CD4-positive, alpha-beta T cell (primary cell): ENCODE measurements at regions of chr19 and their contacts with region 1.

Region 1: DNA sequence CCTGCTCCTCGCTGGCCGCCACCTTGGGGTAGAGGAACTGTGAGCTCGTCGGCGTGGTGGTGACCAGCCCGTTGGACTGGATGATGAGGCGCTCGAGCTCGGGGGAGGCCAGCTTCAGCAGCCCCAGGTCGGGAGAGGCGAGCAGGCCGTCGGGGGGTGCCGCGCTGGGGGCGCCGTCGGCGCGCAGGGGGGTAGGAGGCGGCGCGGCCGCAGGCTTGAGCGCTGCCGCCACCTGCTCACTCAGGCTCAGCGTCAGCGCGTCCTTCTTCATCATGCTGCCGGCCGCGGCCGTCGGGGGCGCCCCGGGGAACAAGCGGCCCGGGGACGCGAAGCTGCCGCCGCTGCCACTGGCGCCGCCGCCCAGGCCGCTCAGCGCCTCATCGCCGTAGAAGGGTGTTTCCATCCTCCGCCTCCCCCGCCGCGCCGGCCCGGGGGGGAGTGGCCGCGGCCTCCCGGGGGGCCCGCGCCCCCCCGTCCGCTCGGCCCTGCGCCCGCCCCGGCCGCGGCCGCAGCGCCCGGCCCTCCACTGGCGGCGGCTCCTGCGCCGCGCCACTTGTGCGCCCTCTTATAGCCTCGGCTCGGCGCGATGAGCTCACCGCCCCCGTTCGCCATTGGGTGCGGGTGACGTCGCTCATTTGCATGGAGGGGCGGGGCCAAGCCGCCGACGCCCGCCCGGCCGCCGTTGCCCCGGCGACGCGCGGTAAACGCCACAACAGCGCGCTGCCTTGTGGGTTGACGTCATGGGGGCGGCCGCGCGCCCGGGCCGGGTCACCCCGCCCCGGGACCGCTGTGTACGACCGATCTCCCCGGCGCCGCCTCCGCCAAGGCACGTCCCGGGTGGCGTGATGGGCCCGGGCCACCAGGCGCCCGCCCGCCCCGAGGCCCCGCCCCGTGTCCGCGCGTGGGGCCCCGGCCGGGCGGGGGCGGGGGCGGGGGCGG is at the start of gene JUND:
- DNase-seq: peak; percentile 92 to 100 (median 97)
- ATAC-seq: peak; percentile 63
- H3K4me3 ChIP-seq: peak within 1 kb of the TSS; percentile 99
- H3K4me3 Mint-ChIP-seq: peak within 1 kb of the TSS; percentile 99
- H3K27ac ChIP-seq: peak within 1 kb of the TSS; percentile 99
- H3K27ac Mint-ChIP-seq: peak within 1 kb of the TSS; percentile 100
- H3K4me1 ChIP-seq: peaks cover 65% of the 10 kb centered on the region
- H3K4me1 Mint-ChIP-seq: peaks cover 58% of the 10 kb centered on the region
- H3K27me3 ChIP-seq: no peaks in the 10 kb centered on the region
- H3K27me3 Mint-ChIP-seq: peaks cover 9% of the 10 kb centered on the region
- CTCF ChIP-seq: no peak
- total RNA-seq, gene JUND: 1,827 to 1,976 TPM

Region 2: DNA sequence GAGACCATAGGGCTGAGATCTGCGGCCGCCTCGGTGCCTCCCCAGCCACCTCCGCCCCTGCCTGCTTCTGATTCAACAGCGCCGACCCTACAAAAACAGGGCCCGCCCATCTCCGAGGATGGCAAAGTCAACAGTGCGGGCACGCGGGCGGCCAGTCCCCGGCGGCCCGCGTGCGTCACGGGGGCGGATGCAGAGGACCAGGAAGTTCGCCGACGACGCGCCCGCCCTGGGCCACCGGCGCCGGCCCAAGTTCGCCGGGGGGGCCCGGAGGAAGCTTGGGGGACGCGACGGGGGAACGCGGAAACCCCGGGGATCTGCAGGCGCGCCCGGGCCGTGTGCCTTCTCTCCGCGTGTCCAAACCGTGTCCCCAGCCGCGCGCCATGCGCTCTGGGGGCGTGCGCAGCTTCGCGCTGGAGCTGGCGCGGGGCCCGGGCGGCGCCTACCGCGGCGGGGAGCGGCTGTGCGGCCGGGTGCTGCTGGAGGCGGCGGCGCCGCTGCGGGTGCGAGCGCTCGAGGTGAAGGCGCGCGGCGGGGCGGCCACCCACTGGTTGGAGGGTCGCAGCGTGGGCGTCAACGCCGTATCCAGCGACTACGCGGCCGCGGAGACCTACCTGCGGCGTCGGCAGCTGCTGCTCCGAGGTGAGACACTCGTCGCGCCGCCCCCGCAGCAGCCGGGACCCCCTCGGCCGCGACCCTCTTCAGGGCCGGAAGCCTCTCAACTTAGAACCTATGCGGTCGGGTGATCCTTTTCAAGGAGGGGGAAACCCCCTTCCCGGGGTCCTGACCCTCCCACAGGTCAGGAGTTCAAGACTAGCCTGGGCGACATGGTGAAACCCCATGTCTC is 280.2 kb before region 1 on chr19:
- CTCF ChIA-PET with region 1: no interaction called
- POLR2A ChIA-PET with region 1: interaction called, 10 read pairs
- intact Hi-C with region 1: no loop called
- DNase-seq: peak; percentile 80 to 99 (median 94)
- ATAC-seq: peak; percentile 80
- H3K4me3 ChIP-seq: peak overlapping the region; percentile 92
- H3K4me3 Mint-ChIP-seq: peak overlapping the region; percentile 93
- H3K27ac ChIP-seq: peak overlapping the region; percentile 91 to 95
- H3K27ac Mint-ChIP-seq: peak overlapping the region; percentile 98
- H3K4me1 ChIP-seq: peaks cover 49% of the 10 kb centered on the region
- H3K4me1 Mint-ChIP-seq: peaks cover 28% of the 10 kb centered on the region
- H3K27me3 ChIP-seq: no peaks in the 10 kb centered on the region
- H3K27me3 Mint-ChIP-seq: peaks cover 4% of the 10 kb centered on the region
- CTCF ChIP-seq: no peak

Region 3: GRCh38 chr19:18117692-18118378 is 163.5 kb before region 1 on chr19:
- CTCF ChIA-PET with region 1: interaction called, 3 read pairs
- POLR2A ChIA-PET with region 1: interaction called, 20 read pairs
- intact Hi-C with region 1: no loop called
- DNase-seq: peak; percentile 88 to 99 (median 96)
- ATAC-seq: peak; percentile 72
- H3K4me3 ChIP-seq: peak overlapping the region; percentile 86
- H3K4me3 Mint-ChIP-seq: peak overlapping the region; percentile 90
- H3K27ac ChIP-seq: peak overlapping the region; percentile 77 to 80
- H3K27ac Mint-ChIP-seq: peak overlapping the region; percentile 97
- H3K4me1 ChIP-seq: peaks cover 58% of the 10 kb centered on the region
- H3K4me1 Mint-ChIP-seq: peaks cover 37% of the 10 kb centered on the region
- H3K27me3 ChIP-seq: no peaks in the 10 kb centered on the region
- H3K27me3 Mint-ChIP-seq: no peaks in the 10 kb centered on the region
- CTCF ChIP-seq: no peak

Region 4: DNA sequence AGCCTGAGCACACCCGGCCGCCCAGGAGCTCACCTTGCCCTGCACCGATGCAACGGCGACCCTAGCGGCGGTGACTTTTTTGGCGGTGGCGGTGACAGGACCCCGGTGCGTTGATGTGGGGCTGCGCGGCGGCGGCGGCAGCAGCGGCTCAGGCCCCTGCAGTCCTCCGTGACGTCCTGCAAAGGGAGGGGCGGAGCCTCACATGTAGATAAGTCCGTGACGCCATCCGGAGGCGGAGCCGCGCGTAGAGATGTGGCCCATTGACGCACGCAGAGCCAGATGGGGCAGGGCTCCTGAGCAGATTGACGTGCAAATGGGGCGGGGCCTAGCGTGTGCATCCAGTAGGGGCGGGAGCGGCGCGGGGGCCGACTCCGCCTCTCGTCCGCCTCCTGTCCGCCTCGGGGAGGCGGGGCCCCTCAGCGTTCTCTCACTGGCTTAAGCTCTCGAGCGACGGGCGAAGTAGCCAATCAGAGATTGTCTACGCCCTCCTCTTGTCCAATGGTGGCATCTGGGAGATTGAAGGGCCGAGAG is 77.4 kb before region 1 on chr19 and contains the start of gene RAB3A:
- CTCF ChIA-PET with region 1: interaction called, 8 read pairs
- POLR2A ChIA-PET with region 1: interaction called, 67 read pairs
- intact Hi-C with region 1: no loop called
- DNase-seq: peak; percentile 98 to 100 (median 99)
- ATAC-seq: peak; percentile 87
- H3K4me3 ChIP-seq: peak within 1 kb of the TSS; percentile 89
- H3K4me3 Mint-ChIP-seq: peak within 1 kb of the TSS; percentile 96
- H3K27ac ChIP-seq: peak within 1 kb of the TSS; percentile 8 to 56
- H3K27ac Mint-ChIP-seq: peak within 1 kb of the TSS; percentile 91
- H3K4me1 ChIP-seq: peaks cover 33% of the 10 kb centered on the region
- H3K4me1 Mint-ChIP-seq: peaks cover 22% of the 10 kb centered on the region
- H3K27me3 ChIP-seq: no peaks in the 10 kb centered on the region
- H3K27me3 Mint-ChIP-seq: peaks cover 6% of the 10 kb centered on the region
- CTCF ChIP-seq: no peak
- total RNA-seq, gene RAB3A: 28.9 to 31.2 TPM

Region 5: DNA sequence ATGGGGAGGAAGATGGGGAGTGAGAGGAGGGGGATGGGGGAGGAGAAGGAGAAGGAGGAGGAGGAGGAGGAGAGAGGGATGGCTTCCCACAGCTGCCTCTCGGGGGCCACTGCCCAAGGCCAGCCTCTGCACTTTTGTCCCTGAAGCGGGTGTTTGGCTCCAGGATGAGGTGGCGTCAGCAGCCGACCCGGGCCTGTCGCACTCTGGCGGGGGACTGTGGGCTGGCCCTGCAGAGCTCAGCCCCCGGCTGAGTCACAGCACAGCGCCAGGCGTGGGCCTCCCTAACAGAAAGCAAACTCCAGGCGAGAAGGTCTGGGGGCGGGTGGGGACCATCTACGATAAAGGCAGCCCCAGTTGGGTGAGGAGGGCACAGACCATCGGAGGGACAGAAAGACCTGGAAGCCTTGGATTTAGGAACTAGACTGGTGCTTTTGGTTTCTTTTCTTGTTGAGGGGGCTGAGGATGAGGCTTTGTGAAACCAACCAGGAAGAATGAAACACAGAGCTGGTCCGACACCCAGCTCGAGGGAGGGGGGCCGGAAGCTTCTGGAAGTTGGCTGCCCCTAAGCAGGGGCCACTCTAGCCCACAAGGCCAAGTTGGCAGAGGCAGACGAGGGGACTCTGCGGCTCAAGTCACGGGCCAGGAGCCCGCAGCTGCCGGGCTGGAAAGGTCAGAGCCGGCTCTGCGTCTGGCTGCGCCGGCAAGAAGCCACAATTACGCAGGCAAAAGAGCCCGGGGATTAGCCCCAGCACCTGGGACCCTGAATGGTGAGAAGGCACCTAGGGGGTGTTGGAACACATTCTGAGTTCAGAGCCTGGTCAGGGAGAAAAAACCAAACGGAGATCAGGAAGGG is 23.3 kb after region 1 on chr19:
- CTCF ChIA-PET with region 1: interaction called, 78 read pairs
- POLR2A ChIA-PET with region 1: interaction called, 761 read pairs
- intact Hi-C with region 1: loop called (anchors 1 kb)
- DNase-seq: peak; percentile 62 to 91 (median 81)
- ATAC-seq: peak; percentile 74
- H3K4me3 ChIP-seq: peak overlapping the region; percentile 63
- H3K4me3 Mint-ChIP-seq: peak overlapping the region; percentile 96
- H3K27ac ChIP-seq: peak overlapping the region; percentile 92 to 96
- H3K27ac Mint-ChIP-seq: peak overlapping the region; percentile 98
- H3K4me1 ChIP-seq: peaks cover 79% of the 10 kb centered on the region
- H3K4me1 Mint-ChIP-seq: peaks cover 47% of the 10 kb centered on the region
- H3K27me3 ChIP-seq: no peaks in the 10 kb centered on the region
- H3K27me3 Mint-ChIP-seq: no peaks in the 10 kb centered on the region
- CTCF ChIP-seq: no peak

Region 6: DNA sequence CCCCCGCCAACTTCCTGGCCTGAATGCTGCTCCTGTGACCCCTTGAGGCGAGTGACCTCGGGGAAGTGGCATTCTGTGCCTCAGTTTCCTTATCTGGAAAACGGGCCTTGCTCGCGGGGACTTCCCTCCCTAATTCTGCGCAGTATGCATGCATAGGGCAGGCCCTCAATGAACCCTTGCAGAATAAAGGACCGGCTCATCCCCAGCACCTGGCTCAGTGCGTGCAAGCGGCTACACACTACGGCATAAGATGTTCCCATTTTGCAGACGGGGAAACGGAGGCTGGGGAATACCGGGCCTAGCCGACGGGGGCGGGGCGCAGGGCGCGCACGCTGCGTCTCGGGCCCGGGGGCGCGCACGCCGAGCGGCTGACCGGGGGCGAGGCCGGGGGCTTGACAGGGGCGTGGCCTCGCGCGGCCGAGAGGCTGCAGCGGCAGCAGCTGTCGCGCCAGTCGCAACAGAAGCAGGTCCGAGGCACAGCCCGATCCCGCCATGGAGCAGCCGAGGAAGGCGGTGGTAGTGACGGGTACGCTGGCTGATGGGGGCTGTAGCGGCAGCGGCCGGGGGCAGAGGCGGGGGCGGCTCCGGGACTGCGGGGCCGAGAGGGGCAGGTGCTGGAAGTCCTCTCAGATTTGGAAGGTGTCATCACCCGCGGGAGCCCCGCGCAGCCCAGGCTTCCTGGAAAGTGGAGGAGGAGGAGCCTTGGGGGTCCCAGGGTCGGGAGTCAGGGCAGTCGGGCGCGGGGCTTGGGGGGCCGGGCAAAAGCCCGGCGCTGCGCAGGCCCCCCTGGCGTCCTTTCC is 59.0 kb after region 1 on chr19 and contains the start of gene PGPEP1:
- CTCF ChIA-PET with region 1: interaction called, 5 read pairs
- POLR2A ChIA-PET with region 1: interaction called, 39 read pairs
- intact Hi-C with region 1: no loop called
- DNase-seq: peak in 11 of 14 experiments; percentile 27 to 81 (median 68)
- ATAC-seq: peak; percentile 41
- H3K4me3 ChIP-seq: peak within 1 kb of the TSS; percentile 82
- H3K4me3 Mint-ChIP-seq: peak within 1 kb of the TSS; percentile 89
- H3K27ac ChIP-seq: peak within 1 kb of the TSS; percentile 45 to 49
- H3K27ac Mint-ChIP-seq: peak within 1 kb of the TSS; percentile 77
- H3K4me1 ChIP-seq: peaks cover 21% of the 10 kb centered on the region
- H3K4me1 Mint-ChIP-seq: peaks cover 15% of the 10 kb centered on the region
- H3K27me3 ChIP-seq: no peaks in the 10 kb centered on the region
- H3K27me3 Mint-ChIP-seq: no peaks in the 10 kb centered on the region
- CTCF ChIP-seq: no peak
- total RNA-seq, gene PGPEP1: 24.4 to 25.9 TPM

Region 7: GRCh38 chr19:18364826-18365528 is 83.6 kb after region 1 on chr19:
- CTCF ChIA-PET with region 1: no interaction called
- POLR2A ChIA-PET with region 1: no interaction called
- intact Hi-C with region 1: no loop called
- DNase-seq: peak in 1 of 14 experiments; percentile 34
- ATAC-seq: no peak
- H3K4me3 ChIP-seq: no peak overlapping the region
- H3K4me3 Mint-ChIP-seq: no peak overlapping the region
- H3K27ac ChIP-seq: no peak overlapping the region
- H3K27ac Mint-ChIP-seq: no peak overlapping the region
- H3K4me1 ChIP-seq: no peaks in the 10 kb centered on the region
- H3K4me1 Mint-ChIP-seq: no peaks in the 10 kb centered on the region
- H3K27me3 ChIP-seq: no peaks in the 10 kb centered on the region
- H3K27me3 Mint-ChIP-seq: no peaks in the 10 kb centered on the region
- CTCF ChIP-seq: no peak

Region 8: DNA sequence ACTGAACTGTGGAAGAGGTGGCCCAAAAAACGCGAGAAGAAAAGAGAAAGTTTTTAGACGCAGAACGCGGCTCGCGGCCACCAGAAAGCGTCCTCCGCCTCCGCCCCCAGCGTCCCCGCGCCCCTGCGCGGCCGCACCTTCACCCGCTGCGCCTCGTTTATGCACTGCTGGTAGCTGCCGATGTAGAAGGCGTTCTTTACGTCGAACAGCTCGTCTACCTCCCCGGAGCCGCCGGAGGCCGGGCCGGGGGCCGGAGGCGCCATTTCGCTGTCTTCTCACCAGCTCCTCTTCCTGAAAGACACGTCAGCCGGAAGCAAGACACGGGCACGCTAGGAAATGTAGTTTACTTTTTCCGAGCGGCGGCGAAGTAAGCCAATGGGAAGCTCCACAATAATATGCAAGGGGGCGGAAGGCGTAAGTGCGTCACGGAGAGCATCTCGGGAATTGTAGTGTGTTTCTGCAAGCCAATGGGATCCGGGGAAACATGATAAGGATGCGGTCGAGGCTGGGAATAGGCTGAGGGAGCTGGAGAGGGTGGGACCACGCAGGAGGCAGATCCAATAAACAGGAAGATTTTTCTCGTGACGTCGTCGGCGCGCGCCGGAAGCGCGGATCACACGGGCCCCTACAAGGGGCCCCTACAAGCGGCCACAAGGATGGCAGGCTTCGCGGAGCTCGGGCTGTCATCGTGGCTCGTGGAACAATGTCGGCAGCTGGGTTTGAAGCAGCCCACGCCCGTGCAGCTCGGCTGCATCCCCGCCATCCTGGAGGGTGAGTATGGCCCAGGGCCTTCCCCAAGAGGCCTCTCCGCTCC is 637.9 kb after region 1 on chr19 and contains the starts of genes COPE and DDX49:
- CTCF ChIA-PET with region 1: no interaction called
- POLR2A ChIA-PET with region 1: interaction called, 18 read pairs
- intact Hi-C with region 1: no loop called
- DNase-seq: peak; percentile 92 to 100 (median 97)
- ATAC-seq: peak; percentile 94
- H3K4me3 ChIP-seq: peak within 1 kb of the TSS; percentile 65
- H3K4me3 Mint-ChIP-seq: peak within 1 kb of the TSS; percentile 84
- H3K27ac ChIP-seq: peak within 1 kb of the TSS; percentile 92
- H3K27ac Mint-ChIP-seq: peak within 1 kb of the TSS; percentile 66
- H3K4me1 ChIP-seq: peaks cover 47% of the 10 kb centered on the region
- H3K4me1 Mint-ChIP-seq: peaks cover 42% of the 10 kb centered on the region
- H3K27me3 ChIP-seq: no peaks in the 10 kb centered on the region
- H3K27me3 Mint-ChIP-seq: no peaks in the 10 kb centered on the region
- CTCF ChIP-seq: no peak
- total RNA-seq, gene COPE: 135 to 143 TPM
- total RNA-seq, gene DDX49: 47.9 to 49.7 TPM